ENCODE measurements at regions of chr12 and their contacts with region 1.

Region 1: GRCh38 chr12:15590180-15590826 is 198.9 kb downstream of the EPS8 start:
- DNase-seq: peak; percentile 7 to 81 (median 27)
- ATAC-seq: peak; percentile 99
- H3K4me3 ChIP-seq: peak overlapping the region; percentile 14
- H3K4me3 Mint-ChIP-seq: peak overlapping the region; percentile 78
- H3K27ac ChIP-seq: no peak overlapping the region
- H3K27ac Mint-ChIP-seq: peak overlapping the region; percentile 28
- H3K4me1 ChIP-seq: peaks cover 4% of the 10 kb centered on the region
- H3K4me1 Mint-ChIP-seq: peaks cover 9% of the 10 kb centered on the region
- H3K27me3 ChIP-seq: no peaks in the 10 kb centered on the region
- H3K27me3 Mint-ChIP-seq: no peaks in the 10 kb centered on the region
- CTCF ChIP-seq: peak; percentile 86

Region 2: DNA sequence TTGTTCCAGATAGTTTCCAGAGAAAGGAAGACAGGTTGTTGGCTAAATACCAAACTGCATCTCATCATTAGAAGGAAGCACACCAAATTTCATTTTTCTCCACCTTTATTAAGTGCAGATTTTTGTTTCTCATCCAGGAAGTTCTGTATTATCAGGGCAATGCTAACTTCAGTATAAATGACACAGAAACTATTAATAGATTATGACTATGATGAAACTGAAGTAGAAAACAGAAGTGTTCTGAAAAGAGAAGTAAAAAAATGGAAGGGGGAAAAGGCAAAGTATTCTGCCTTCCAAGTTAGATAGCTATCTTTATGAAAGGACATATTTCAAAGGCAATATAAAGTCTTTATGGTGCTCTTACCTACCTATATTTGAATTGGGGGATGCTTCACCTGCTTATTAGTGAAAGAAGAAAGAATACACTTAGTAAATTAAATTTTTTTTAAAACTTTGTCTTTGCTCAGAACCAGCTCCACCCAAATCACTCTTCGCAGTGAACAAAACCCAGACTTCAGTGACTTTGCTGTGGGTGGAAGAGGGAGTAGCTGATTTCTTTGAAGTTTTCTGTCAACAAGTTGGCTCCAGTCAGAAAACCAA is 44.1 kb before region 1 on chr12:
- CTCF ChIA-PET with region 1: interaction called, 10 read pairs
- POLR2A ChIA-PET with region 1: interaction called, 24 read pairs
- intact Hi-C with region 1: no loop called
- DNase-seq: peak in 10 of 14 experiments; percentile 21 to 81 (median 45)
- ATAC-seq: peak; percentile 93
- H3K4me3 ChIP-seq: peak overlapping the region; percentile 19
- H3K4me3 Mint-ChIP-seq: peak overlapping the region; percentile 83
- H3K27ac ChIP-seq: peak overlapping the region; percentile 59 to 67
- H3K27ac Mint-ChIP-seq: peak overlapping the region; percentile 100
- H3K4me1 ChIP-seq: peaks cover 22% of the 10 kb centered on the region
- H3K4me1 Mint-ChIP-seq: peaks cover 85% of the 10 kb centered on the region
- H3K27me3 ChIP-seq: no peaks in the 10 kb centered on the region
- H3K27me3 Mint-ChIP-seq: no peaks in the 10 kb centered on the region
- CTCF ChIP-seq: no peak

Region 3: DNA sequence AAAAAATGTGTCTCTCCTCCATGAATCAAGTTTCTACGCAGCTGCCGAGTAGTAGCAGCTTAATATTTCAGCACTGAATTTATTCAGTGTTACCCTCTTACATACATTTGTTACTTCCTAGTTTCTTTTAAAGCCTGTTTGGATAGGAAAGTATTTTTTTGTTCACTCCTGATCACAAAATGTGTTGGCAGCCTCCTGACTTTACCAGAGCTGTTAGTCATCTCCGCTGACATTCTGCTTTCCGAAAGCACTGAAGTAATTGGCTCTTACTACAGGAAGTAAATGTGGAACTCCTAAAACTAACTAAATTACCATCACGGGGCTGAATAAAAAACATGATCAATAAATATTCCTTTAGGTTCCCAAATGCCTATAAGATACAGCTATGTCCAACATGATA is 26.6 kb before region 1 on chr12:
- CTCF ChIA-PET with region 1: interaction called, 11 read pairs
- POLR2A ChIA-PET with region 1: interaction called, 3 read pairs
- intact Hi-C with region 1: no loop called
- DNase-seq: peak in 4 of 14 experiments; percentile 57 to 72 (median 66)
- ATAC-seq: peak; percentile 85
- H3K4me3 ChIP-seq: peak overlapping the region; percentile 24
- H3K4me3 Mint-ChIP-seq: peak overlapping the region; percentile 56
- H3K27ac ChIP-seq: peak overlapping the region; percentile 64 to 76
- H3K27ac Mint-ChIP-seq: peak overlapping the region; percentile 85
- H3K4me1 ChIP-seq: peaks cover 10% of the 10 kb centered on the region
- H3K4me1 Mint-ChIP-seq: peaks cover 52% of the 10 kb centered on the region
- H3K27me3 ChIP-seq: no peaks in the 10 kb centered on the region
- H3K27me3 Mint-ChIP-seq: no peaks in the 10 kb centered on the region
- CTCF ChIP-seq: no peak

Region 4: GRCh38 chr12:15789220-15790171 is 199.2 kb after region 1 on chr12 and contains the start of gene EPS8:
- CTCF ChIA-PET with region 1: no interaction called
- POLR2A ChIA-PET with region 1: no interaction called
- intact Hi-C with region 1: loop called in 1 of 2 experiments (anchors 5 kb)
- DNase-seq: peak; percentile 77 to 94 (median 86)
- ATAC-seq: peak; percentile 92
- H3K4me3 ChIP-seq: peak within 1 kb of the TSS; percentile 69
- H3K4me3 Mint-ChIP-seq: peak within 1 kb of the TSS; percentile 98
- H3K27ac ChIP-seq: no peak within 1 kb of the TSS
- H3K27ac Mint-ChIP-seq: peak within 1 kb of the TSS; percentile 60
- H3K4me1 ChIP-seq: peaks cover 19% of the 10 kb centered on the region
- H3K4me1 Mint-ChIP-seq: peaks cover 15% of the 10 kb centered on the region
- H3K27me3 ChIP-seq: peaks cover 3 to 38% of the 10 kb centered on the region in 2 experiments
- H3K27me3 Mint-ChIP-seq: peaks cover 60% of the 10 kb centered on the region
- CTCF ChIP-seq: no peak
- total RNA-seq, gene EPS8: 0.80 to 1.1 TPM

Region 5: DNA sequence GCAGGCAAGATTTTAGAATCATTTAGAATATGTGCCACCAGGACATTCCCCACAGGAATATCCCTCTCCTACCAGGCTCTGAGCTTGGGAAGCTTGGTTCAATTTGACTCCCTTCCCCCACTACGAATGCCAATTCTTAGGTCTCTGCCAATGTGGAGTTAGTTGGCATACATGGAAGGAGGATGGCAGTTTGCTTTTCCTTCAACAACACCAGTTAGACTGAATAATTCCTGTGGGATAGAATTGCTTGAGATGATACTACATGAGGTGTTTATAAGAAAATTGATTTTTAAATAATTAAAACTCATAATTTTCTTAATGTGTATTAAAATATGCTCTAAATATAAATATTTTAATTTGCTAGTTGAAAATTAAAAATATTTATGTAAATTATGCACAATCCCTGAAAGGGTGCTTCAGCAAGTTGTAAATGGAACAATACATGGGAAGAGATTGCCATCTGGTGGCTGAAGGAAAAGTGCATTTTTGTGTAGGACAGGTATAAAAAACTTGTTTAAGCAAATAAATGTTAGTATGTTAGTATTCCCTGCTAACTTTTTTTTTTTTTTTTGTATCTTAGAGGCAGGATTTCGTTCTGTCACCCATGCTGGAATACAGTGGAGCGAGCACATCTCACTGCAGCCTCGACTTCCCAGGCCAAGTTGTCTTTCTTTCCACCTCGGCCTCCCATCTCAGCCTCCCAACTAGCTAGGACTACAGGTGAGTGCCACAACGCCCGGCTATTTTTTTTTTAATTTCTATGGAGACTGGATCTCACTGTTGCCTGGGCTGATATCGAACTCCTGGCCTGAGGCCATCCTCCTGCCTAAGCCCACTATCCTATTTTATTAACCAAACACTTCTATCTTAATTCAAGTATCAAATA is 266.0 kb after region 1 on chr12:
- CTCF ChIA-PET with region 1: interaction called, 6 read pairs
- POLR2A ChIA-PET with region 1: interaction called, 4 read pairs
- intact Hi-C with region 1: loop called (anchors 1 kb)
- DNase-seq: peak in 10 of 14 experiments; percentile 19 to 80 (median 40)
- ATAC-seq: peak; percentile 61
- H3K4me3 ChIP-seq: no peak overlapping the region
- H3K4me3 Mint-ChIP-seq: no peak overlapping the region
- H3K27ac ChIP-seq: no peak overlapping the region
- H3K27ac Mint-ChIP-seq: no peak overlapping the region
- H3K4me1 ChIP-seq: no peaks in the 10 kb centered on the region
- H3K4me1 Mint-ChIP-seq: no peaks in the 10 kb centered on the region
- H3K27me3 ChIP-seq: no peaks in the 10 kb centered on the region
- H3K27me3 Mint-ChIP-seq: peaks cover 28% of the 10 kb centered on the region
- CTCF ChIP-seq: peak; percentile 79

Region 6: DNA sequence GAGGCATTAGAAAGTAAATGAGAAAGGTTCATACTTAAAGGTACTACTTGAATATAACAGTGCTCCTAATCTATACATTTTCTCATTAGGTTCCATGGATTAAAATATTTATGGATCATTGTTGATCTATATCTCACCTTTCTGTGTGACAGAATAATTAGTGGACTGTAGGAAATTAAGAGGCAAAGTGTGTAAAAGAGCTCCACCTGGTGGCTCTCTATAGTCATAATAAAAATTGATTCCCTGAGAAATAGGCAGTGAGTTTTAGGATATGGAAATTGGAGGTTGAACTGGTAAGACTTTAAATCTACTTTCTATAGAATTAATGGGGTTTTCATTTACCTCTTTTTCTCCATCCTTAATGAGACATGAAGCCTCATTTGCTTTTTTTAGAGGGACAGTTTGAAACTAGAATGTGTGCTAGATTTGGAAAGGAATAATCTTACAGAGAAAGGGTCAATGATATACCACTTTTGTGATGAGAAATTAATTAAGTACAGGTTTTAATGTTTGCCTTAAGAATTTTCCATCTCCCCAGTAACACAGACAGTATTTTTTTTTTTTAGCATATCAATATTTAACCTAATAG is 309.1 kb after region 1 on chr12:
- CTCF ChIA-PET with region 1: interaction called, 4 read pairs
- POLR2A ChIA-PET with region 1: no interaction called
- intact Hi-C with region 1: loop called (anchors 1 to 2 kb)
- DNase-seq: peak in 4 of 14 experiments; percentile 16 to 63 (median 52)
- ATAC-seq: peak; percentile 62
- H3K4me3 ChIP-seq: no peak overlapping the region
- H3K4me3 Mint-ChIP-seq: no peak overlapping the region
- H3K27ac ChIP-seq: no peak overlapping the region
- H3K27ac Mint-ChIP-seq: peak overlapping the region; percentile 32
- H3K4me1 ChIP-seq: no peaks in the 10 kb centered on the region
- H3K4me1 Mint-ChIP-seq: peaks cover 7% of the 10 kb centered on the region
- H3K27me3 ChIP-seq: no peaks in the 10 kb centered on the region
- H3K27me3 Mint-ChIP-seq: no peaks in the 10 kb centered on the region
- CTCF ChIP-seq: peak; percentile 88

Region 7: GRCh38 chr12:15956413-15957185 is 366.3 kb after region 1 on chr12:
- CTCF ChIA-PET with region 1: no interaction called
- POLR2A ChIA-PET with region 1: no interaction called
- intact Hi-C with region 1: no loop called
- DNase-seq: no peak
- ATAC-seq: no peak
- H3K4me3 ChIP-seq: no peak overlapping the region
- H3K4me3 Mint-ChIP-seq: no peak overlapping the region
- H3K27ac ChIP-seq: no peak overlapping the region
- H3K27ac Mint-ChIP-seq: no peak overlapping the region
- H3K4me1 ChIP-seq: no peaks in the 10 kb centered on the region
- H3K4me1 Mint-ChIP-seq: no peaks in the 10 kb centered on the region
- H3K27me3 ChIP-seq: no peaks in the 10 kb centered on the region
- H3K27me3 Mint-ChIP-seq: no peaks in the 10 kb centered on the region
- CTCF ChIP-seq: no peak

Region 8: GRCh38 chr12:16553457-16553856 is 963.2 kb after region 1 on chr12:
- CTCF ChIA-PET with region 1: no interaction called
- POLR2A ChIA-PET with region 1: no interaction called
- intact Hi-C with region 1: no loop called
- DNase-seq: no peak
- ATAC-seq: no peak
- H3K4me3 ChIP-seq: no peak overlapping the region
- H3K4me3 Mint-ChIP-seq: no peak overlapping the region
- H3K27ac ChIP-seq: no peak overlapping the region
- H3K27ac Mint-ChIP-seq: no peak overlapping the region
- H3K4me1 ChIP-seq: no peaks in the 10 kb centered on the region
- H3K4me1 Mint-ChIP-seq: no peaks in the 10 kb centered on the region
- H3K27me3 ChIP-seq: no peaks in the 10 kb centered on the region
- H3K27me3 Mint-ChIP-seq: no peaks in the 10 kb centered on the region
- CTCF ChIP-seq: no peak

Measured in CD4-positive, alpha-beta T cell (primary cell).